ENCODE measurements at regions of chr17 and their contacts with region 1.

Region 1: GRCh38 chr17:18314731-18315561 is at the starts of genes SMCR8 and TOP3A:
- DNase-seq: peak; percentile 99
- ATAC-seq: peak; percentile 98
- total RNA-seq, gene SMCR8: 11.8 TPM
- total RNA-seq, gene TOP3A: 10.4 TPM

Region 2: DNA sequence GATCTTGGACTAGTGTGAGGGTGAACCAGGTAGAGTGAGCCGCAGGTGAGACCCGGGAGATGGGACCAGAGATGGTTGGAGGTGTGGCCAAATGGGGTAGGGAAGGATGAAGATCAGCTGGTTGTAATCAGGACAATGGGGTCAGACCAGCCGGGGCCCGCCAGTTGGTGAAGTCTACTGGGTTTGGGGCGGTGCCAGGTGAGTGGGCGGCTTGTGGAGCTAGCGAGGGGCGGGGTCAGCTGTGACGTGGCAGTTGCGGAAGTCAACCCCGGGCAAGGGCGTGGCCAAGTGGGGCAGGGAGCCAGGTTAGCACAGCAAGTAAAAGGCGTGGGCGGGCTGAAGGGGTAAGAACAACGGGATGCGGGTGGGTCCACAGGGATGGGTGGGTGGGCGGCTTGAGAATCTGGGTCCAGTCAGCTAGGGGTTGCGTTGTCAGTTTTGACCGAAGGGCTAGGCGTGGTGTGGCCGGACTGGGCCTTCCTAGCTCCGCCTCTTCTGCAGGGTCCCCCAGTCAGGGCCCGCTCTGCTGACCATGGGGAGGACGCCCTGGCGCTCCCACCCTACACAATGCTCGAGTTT is 156.8 kb before region 1 on chr17:
- intact Hi-C with region 1: no loop called
- DNase-seq: peak; percentile 97
- ATAC-seq: peak; percentile 51

Region 3: DNA sequence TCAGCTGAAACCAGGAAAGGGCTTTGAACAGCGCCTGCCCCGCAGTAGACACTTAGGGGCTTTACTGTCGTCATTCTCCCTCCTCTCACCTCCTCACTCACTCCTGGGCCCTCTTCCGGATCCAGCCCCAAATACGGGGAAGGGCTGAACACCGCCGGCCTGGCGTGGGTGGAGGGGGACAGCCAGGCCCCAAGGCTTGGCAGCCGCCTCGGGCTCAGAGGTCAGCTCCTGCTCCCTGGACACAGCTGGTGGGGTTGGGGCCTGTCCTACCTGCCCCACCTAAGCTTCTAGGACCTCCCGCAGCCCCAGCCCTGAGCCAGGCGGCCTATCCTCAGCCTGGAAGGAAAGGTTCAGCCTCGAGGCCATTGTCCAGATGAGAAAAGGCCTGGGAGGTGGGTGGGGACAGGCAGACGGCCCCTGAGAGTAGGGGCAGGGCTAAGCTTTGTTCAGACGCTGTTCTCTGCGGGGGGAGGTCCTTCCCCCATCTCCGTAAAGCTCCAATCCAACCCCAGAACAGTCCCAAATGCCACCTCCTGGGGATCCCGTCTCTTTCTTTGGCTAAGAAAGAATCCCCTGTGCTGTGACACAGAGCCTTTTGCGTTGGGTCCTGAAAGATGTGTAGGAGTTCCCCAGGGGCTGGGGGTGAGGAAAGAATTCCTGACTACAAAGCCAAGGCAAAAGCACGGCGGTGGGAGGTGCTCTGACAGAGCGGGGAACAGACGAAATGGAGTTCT is 90.4 kb before region 1 on chr17:
- intact Hi-C with region 1: loop called (anchors 5 kb)
- DNase-seq: peak; percentile 63
- ATAC-seq: peak; percentile 64

Region 4: GRCh38 chr17:18260332-18261144 is 54.4 kb before region 1 on chr17 and contains the start of gene MIEF2:
- intact Hi-C with region 1: loop called (anchors 2 kb)
- DNase-seq: peak; percentile 98
- ATAC-seq: peak; percentile 87
- total RNA-seq, gene MIEF2: 31.3 TPM

Region 5: DNA sequence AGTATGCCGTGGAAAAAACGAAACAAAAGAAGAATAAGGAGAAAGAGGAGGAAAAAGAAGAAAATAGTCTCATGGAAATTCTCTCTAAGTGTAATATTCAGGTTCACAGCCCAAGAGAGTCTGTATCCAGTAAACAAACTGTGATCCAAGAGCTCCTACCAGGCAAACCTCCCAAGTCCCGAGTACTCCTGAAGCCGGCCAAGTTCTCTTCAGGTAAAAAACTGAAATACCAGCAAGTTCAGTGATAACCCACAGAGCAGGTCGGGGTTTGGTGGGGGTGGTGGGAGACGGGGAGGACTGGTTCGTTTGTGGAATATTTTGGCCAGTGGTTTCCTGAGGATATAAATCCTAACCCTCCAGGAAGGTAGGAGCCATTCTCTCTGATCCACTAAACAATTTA is 457.5 kb after region 1 on chr17:
- intact Hi-C with region 1: no loop called
- DNase-seq: no peak
- ATAC-seq: no peak

Measured in Right ventricle myocardium inferior (tissue), 1 donor.